ENCODE measurements at regions of chr17 and their contacts with region 1.

Region 1: DNA sequence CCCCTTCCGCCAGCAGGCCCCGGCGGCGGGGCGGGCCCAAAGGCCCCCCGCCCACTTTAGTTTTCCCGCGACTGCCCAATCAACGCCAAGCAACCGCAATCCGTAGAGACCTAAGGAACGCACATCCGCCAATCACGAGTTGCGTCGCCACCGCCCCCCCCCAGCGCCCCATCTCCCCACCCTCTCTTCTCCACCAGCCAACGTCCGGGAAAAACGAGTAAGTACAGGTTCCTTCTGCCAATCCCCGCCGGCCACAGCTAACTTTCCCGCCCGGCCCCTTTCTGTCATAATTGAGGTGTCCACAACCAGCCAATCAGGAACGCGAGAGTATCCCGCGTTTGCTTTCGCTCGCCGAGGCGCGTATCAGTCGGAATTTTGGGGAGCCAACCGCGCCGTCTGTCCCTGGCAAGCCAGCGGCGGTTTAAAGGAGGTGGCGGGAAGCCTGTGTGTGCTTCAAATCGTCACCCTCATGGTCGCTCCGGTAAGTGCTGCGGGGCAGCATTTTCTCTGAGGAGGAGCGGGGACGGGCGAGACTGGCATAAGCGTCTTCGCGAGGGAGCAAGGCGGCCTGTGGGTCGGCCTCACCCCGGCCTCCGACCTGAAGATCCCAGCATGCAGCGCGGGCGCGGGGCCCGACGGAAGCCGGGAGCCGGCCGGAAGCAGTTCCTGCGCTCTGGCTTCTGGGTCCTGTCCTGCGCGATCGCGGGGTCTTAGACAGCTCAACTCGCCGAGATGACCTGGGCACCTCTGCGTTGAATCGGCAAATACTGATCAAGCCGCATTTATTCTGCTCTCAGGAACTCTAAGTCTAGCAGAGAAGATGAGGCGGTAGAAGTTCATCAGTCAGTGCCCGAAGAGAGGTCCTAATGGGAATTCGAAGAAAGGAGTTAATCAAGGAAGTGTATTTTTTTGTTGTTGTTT is at the start of gene MIS12:
- DNase-seq: peak; percentile 78 to 100 (median 97)
- ATAC-seq: peak; percentile 93
- H3K4me3 ChIP-seq: peak within 1 kb of the TSS; percentile 94
- H3K4me3 Mint-ChIP-seq: peak within 1 kb of the TSS; percentile 88 to 97 (median 94)
- H3K27ac ChIP-seq: peak within 1 kb of the TSS; percentile 98
- H3K27ac Mint-ChIP-seq: peak within 1 kb of the TSS; percentile 95 to 99 (median 98)
- H3K4me1 ChIP-seq: peaks cover 21 to 28% of the 10 kb centered on the region in 2 donors
- H3K4me1 Mint-ChIP-seq: peaks cover 22 to 77% (median 66%) of the 10 kb centered on the region in 7 donors
- H3K27me3 ChIP-seq: no peaks in the 10 kb centered on the region
- H3K27me3 Mint-ChIP-seq: no peaks in the 10 kb centered on the region
- total RNA-seq, gene MIS12: 16.3 to 53.6 (median 38.4) TPM

Region 2: GRCh38 chr17:4263282-4264215 is 1222.9 kb before region 1 on chr17 and contains the start of gene ANKFY1:
- CTCF ChIA-PET with region 1: no interaction called
- POLR2A ChIA-PET with region 1: no interaction called
- intact Hi-C with region 1: loop called in 1 of 2 experiments (anchors 5 kb)
- DNase-seq: peak; percentile 95 to 99 (median 97)
- ATAC-seq: peak; percentile 98
- H3K4me3 ChIP-seq: peak within 1 kb of the TSS; percentile 73
- H3K4me3 Mint-ChIP-seq: peak within 1 kb of the TSS; percentile 89 to 99 (median 94)
- H3K27ac ChIP-seq: peak within 1 kb of the TSS; percentile 94
- H3K27ac Mint-ChIP-seq: peak within 1 kb of the TSS; percentile 82 to 98 (median 95)
- H3K4me1 ChIP-seq: peaks cover 16 to 17% of the 10 kb centered on the region in 2 donors
- H3K4me1 Mint-ChIP-seq: peaks cover 27 to 49% (median 41%) of the 10 kb centered on the region in 7 donors
- H3K27me3 ChIP-seq: no peaks in the 10 kb centered on the region
- H3K27me3 Mint-ChIP-seq: no peaks in the 10 kb centered on the region
- total RNA-seq, gene ANKFY1: 52.4 to 84.5 (median 69.7) TPM

Region 3: GRCh38 chr17:5065227-5065744 is 421.2 kb before region 1 on chr17:
- CTCF ChIA-PET with region 1: no interaction called
- POLR2A ChIA-PET with region 1: no interaction called
- intact Hi-C with region 1: no loop called
- DNase-seq: no peak
- ATAC-seq: no peak
- H3K4me3 ChIP-seq: no peak overlapping the region
- H3K4me3 Mint-ChIP-seq: no peak overlapping the region
- H3K27ac ChIP-seq: no peak overlapping the region
- H3K27ac Mint-ChIP-seq: no peak overlapping the region
- H3K4me1 ChIP-seq: peaks cover 0 to 2% of the 10 kb centered on the region in 2 donors
- H3K4me1 Mint-ChIP-seq: peaks cover 0 to 10% (median 7%) of the 10 kb centered on the region in 7 donors
- H3K27me3 ChIP-seq: no peaks in the 10 kb centered on the region
- H3K27me3 Mint-ChIP-seq: no peaks in the 10 kb centered on the region

Region 4: GRCh38 chr17:5184288-5184687 is 302.2 kb before region 1 on chr17:
- CTCF ChIA-PET with region 1: no interaction called
- POLR2A ChIA-PET with region 1: no interaction called
- intact Hi-C with region 1: no loop called
- DNase-seq: no peak
- ATAC-seq: peak; percentile 75
- H3K4me3 ChIP-seq: no peak overlapping the region
- H3K4me3 Mint-ChIP-seq: no peak overlapping the region
- H3K27ac ChIP-seq: no peak overlapping the region
- H3K27ac Mint-ChIP-seq: no peak overlapping the region
- H3K4me1 ChIP-seq: no peaks in the 10 kb centered on the region
- H3K4me1 Mint-ChIP-seq: peaks cover 0 to 5% (median 0%) of the 10 kb centered on the region in 7 donors
- H3K27me3 ChIP-seq: no peaks in the 10 kb centered on the region
- H3K27me3 Mint-ChIP-seq: no peaks in the 10 kb centered on the region

Region 5: GRCh38 chr17:5410594-5411272 is 75.7 kb before region 1 on chr17:
- CTCF ChIA-PET with region 1: no interaction called
- POLR2A ChIA-PET with region 1: no interaction called
- intact Hi-C with region 1: no loop called
- DNase-seq: no peak
- ATAC-seq: no peak
- H3K4me3 ChIP-seq: no peak overlapping the region
- H3K4me3 Mint-ChIP-seq: no peak overlapping the region
- H3K27ac ChIP-seq: no peak overlapping the region
- H3K27ac Mint-ChIP-seq: peak overlapping the region in 3 of 9 donors; percentile 23 to 53 (median 38)
- H3K4me1 ChIP-seq: no peaks in the 10 kb centered on the region
- H3K4me1 Mint-ChIP-seq: peaks cover 22 to 41% (median 37%) of the 10 kb centered on the region in 7 donors
- H3K27me3 ChIP-seq: no peaks in the 10 kb centered on the region
- H3K27me3 Mint-ChIP-seq: no peaks in the 10 kb centered on the region

Region 6: GRCh38 chr17:5438716-5439445 is 47.6 kb before region 1 on chr17 and contains the start of gene C1QBP:
- CTCF ChIA-PET with region 1: no interaction called
- POLR2A ChIA-PET with region 1: interaction called, 7 read pairs
- intact Hi-C with region 1: loop called (anchors 1 kb)
- DNase-seq: peak; percentile 85 to 96 (median 91)
- ATAC-seq: peak; percentile 98
- H3K4me3 ChIP-seq: peak within 1 kb of the TSS; percentile 80
- H3K4me3 Mint-ChIP-seq: peak within 1 kb of the TSS; percentile 80 to 95 (median 90)
- H3K27ac ChIP-seq: peak within 1 kb of the TSS; percentile 89
- H3K27ac Mint-ChIP-seq: peak within 1 kb of the TSS; percentile 90 to 98 (median 94)
- H3K4me1 ChIP-seq: peaks cover 19 to 28% of the 10 kb centered on the region in 2 donors
- H3K4me1 Mint-ChIP-seq: peaks cover 16 to 43% (median 37%) of the 10 kb centered on the region in 7 donors
- H3K27me3 ChIP-seq: no peaks in the 10 kb centered on the region
- H3K27me3 Mint-ChIP-seq: no peaks in the 10 kb centered on the region
- total RNA-seq, gene C1QBP: 58.0 to 162 (median 82.3) TPM

Region 7: GRCh38 chr17:5468075-5468473 is 18.4 kb before region 1 on chr17:
- CTCF ChIA-PET with region 1: no interaction called
- POLR2A ChIA-PET with region 1: interaction called, 61 read pairs
- intact Hi-C with region 1: loop called (anchors 1 kb)
- DNase-seq: peak in 5 of 9 donors; percentile 11 to 44 (median 22)
- ATAC-seq: peak; percentile 34
- H3K4me3 ChIP-seq: peak overlapping the region; percentile 72
- H3K4me3 Mint-ChIP-seq: peak overlapping the region; percentile 83 to 95 (median 88)
- H3K27ac ChIP-seq: peak overlapping the region; percentile 68
- H3K27ac Mint-ChIP-seq: peak overlapping the region; percentile 12 to 85 (median 43)
- H3K4me1 ChIP-seq: peaks cover 11 to 12% of the 10 kb centered on the region in 2 donors
- H3K4me1 Mint-ChIP-seq: peaks cover 33 to 49% (median 43%) of the 10 kb centered on the region in 7 donors
- H3K27me3 ChIP-seq: no peaks in the 10 kb centered on the region
- H3K27me3 Mint-ChIP-seq: no peaks in the 10 kb centered on the region

Region 8: GRCh38 chr17:5500589-5501391 is 14.3 kb after region 1 on chr17:
- CTCF ChIA-PET with region 1: no interaction called
- POLR2A ChIA-PET with region 1: interaction called, 34 read pairs
- intact Hi-C with region 1: loop called (anchors 1 kb)
- DNase-seq: peak; percentile 54 to 85 (median 75)
- ATAC-seq: peak; percentile 94
- H3K4me3 ChIP-seq: peak overlapping the region; percentile 45
- H3K4me3 Mint-ChIP-seq: peak overlapping the region; percentile 91 to 99 (median 97)
- H3K27ac ChIP-seq: peak overlapping the region; percentile 69
- H3K27ac Mint-ChIP-seq: peak overlapping the region; percentile 69 to 99 (median 88)
- H3K4me1 ChIP-seq: peaks cover 0 to 6% of the 10 kb centered on the region in 2 donors
- H3K4me1 Mint-ChIP-seq: peaks cover 7 to 30% (median 24%) of the 10 kb centered on the region in 7 donors
- H3K27me3 ChIP-seq: no peaks in the 10 kb centered on the region
- H3K27me3 Mint-ChIP-seq: peaks cover 0 to 7% (median 0%) of the 10 kb centered on the region in 5 donors

Region 9: GRCh38 chr17:5513610-5514009 is 27.1 kb after region 1 on chr17:
- CTCF ChIA-PET with region 1: no interaction called
- POLR2A ChIA-PET with region 1: interaction called, 5 read pairs
- intact Hi-C with region 1: loop called in 1 of 2 experiments (anchors 1 kb)
- DNase-seq: peak in 7 of 9 donors; percentile 27 to 62 (median 57)
- ATAC-seq: peak; percentile 78
- H3K4me3 ChIP-seq: no peak overlapping the region
- H3K4me3 Mint-ChIP-seq: peak overlapping the region; percentile 4 to 73 (median 57)
- H3K27ac ChIP-seq: peak overlapping the region; percentile 36
- H3K27ac Mint-ChIP-seq: peak overlapping the region; percentile 14 to 89 (median 78)
- H3K4me1 ChIP-seq: peaks cover 21 to 23% of the 10 kb centered on the region in 2 donors
- H3K4me1 Mint-ChIP-seq: peaks cover 27 to 47% (median 36%) of the 10 kb centered on the region in 7 donors
- H3K27me3 ChIP-seq: no peaks in the 10 kb centered on the region
- H3K27me3 Mint-ChIP-seq: no peaks in the 10 kb centered on the region

Region 10: DNA sequence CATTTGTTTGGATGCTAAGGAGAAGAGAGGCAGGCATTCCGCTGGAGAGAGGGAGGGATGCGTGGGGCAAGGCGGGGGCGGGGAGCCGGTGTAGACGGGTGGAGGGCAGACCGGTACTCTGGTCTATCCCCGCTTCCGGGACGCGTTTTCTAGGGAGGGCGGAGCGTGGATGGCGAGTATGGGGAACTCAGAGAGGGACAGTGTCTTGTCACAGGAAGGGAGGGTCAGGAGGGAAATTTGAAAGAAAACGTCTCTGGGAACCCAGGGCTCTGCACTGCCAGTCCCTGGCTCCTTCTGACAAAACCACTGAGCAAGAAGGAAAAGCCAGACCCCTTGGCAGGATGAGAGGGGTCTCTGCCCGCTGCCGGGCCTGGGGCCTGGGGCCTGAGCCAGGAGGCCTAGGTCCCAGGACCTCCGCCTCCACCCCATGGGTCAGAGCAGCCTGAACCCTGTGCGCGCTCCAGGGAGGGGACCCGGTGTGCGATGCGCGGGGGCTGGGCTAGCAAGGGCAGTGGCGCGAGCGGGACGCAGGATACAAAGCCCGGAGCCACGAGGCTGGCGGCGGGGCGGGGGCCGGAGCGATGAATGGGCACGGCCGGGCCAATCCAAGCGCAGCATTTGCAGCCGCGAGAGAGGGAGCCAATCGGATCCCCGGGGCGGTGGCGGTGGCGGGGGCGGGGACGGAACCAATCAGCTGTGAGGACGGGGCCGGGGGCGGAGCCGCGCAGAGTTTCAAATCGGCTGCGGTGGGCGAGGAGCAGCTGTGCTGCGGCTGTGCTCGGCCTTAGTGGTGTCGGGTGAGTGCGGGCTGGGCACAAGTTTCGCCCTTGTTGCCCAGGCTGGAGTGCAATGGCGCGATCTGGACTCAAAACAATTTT is 957.5 kb after region 1 on chr17 and contains the start of gene PIMREG:
- CTCF ChIA-PET with region 1: no interaction called
- POLR2A ChIA-PET with region 1: no interaction called
- intact Hi-C with region 1: loop called in 1 of 2 experiments (anchors 1 kb)
- DNase-seq: peak; percentile 74 to 93 (median 84)
- ATAC-seq: peak; percentile 98
- H3K4me3 ChIP-seq: peak within 1 kb of the TSS; percentile 77
- H3K4me3 Mint-ChIP-seq: peak within 1 kb of the TSS; percentile 85 to 98 (median 92)
- H3K27ac ChIP-seq: peak within 1 kb of the TSS; percentile 56
- H3K27ac Mint-ChIP-seq: peak within 1 kb of the TSS in 8 of 9 donors; percentile 63 to 93 (median 84)
- H3K4me1 ChIP-seq: peaks cover 5 to 6% of the 10 kb centered on the region in 2 donors
- H3K4me1 Mint-ChIP-seq: peaks cover 10 to 15% (median 13%) of the 10 kb centered on the region in 7 donors
- H3K27me3 ChIP-seq: no peaks in the 10 kb centered on the region
- H3K27me3 Mint-ChIP-seq: peaks cover 0 to 39% (median 0%) of the 10 kb centered on the region in 5 donors
- total RNA-seq, gene PIMREG: 0.49 to 18.6 TPM in 2 of 5 experiments, not detected in the others